ENCODE measurements at regions of chr1 and their contacts with region 1.

Region 1: GRCh38 chr1:70142075-70142474 is 63.3 kb downstream of the LRRC40 start:
- DNase-seq: no peak
- H3K4me3 ChIP-seq: no peak overlapping the region
- H3K27ac ChIP-seq: no peak overlapping the region
- H3K4me1 ChIP-seq: no peaks in the 10 kb centered on the region
- H3K27me3 ChIP-seq: no peaks in the 10 kb centered on the region
- CTCF ChIP-seq: peak in 1 of 4 experiments; percentile 11
- POLR2A ChIP-seq: no peak

Region 2: GRCh38 chr1:70034403-70034802 is 107.7 kb before region 1 on chr1:
- intact Hi-C with region 1: loop called (anchors 5 kb)
- DNase-seq: no peak
- H3K4me3 ChIP-seq: no peak overlapping the region
- H3K27ac ChIP-seq: no peak overlapping the region
- H3K4me1 ChIP-seq: no peaks in the 10 kb centered on the region
- H3K27me3 ChIP-seq: no peaks in the 10 kb centered on the region
- CTCF ChIP-seq: no peak
- POLR2A ChIP-seq: no peak

Region 3: DNA sequence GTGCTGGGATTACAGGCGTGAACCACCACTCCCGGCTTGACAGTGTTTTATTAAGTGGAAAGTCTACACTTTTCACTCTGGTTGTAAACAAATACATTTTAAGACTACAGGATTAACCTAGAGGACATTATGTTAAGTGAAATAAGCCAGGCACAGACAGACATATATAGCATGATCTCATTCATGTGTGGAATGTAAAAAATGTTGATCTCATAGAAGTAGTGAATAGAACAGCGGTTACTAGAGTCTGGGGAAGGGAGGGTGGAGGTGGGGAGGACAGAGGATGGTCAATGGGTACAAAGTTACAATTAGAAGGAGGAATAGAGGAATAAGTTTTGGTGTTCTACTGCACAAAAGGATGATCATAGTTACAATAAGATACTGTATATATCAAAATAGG is 285.9 kb after region 1 on chr1:
- intact Hi-C with region 1: no loop called
- DNase-seq: no peak
- H3K4me3 ChIP-seq: no peak overlapping the region
- H3K27ac ChIP-seq: no peak overlapping the region
- H3K4me1 ChIP-seq: no peaks in the 10 kb centered on the region
- H3K27me3 ChIP-seq: no peaks in the 10 kb centered on the region
- CTCF ChIP-seq: no peak
- POLR2A ChIP-seq: no peak